Activated T-helper 1 cell treated with anti-CD3 and anti-CD28 coated beads, Interleukin-12 subunit alpha, Interleukin-12 subunit beta, Interleukin-2, Interleukin-4 antibody, amounts not matched to agents 30 ng/mL and 10 ng/mL and 1 ng/mL, durations not matched to agents 14 hours and 24 hours and 36 hours (primary cell): ENCODE measurements at regions of chr11 and their contacts with region 1.

Region 1: GRCh38 chr11:73141848-73142286 is 251 bp downstream of the FCHSD2 start:
- DNase-seq: peak; percentile 61
- H3K4me3 Mint-ChIP-seq: peak overlapping the region; percentile 99
- H3K27ac Mint-ChIP-seq: peak overlapping the region; percentile 96
- H3K4me1 Mint-ChIP-seq: peaks cover 56% of the 10 kb centered on the region
- H3K27me3 Mint-ChIP-seq: no peaks in the 10 kb centered on the region

Region 2: DNA sequence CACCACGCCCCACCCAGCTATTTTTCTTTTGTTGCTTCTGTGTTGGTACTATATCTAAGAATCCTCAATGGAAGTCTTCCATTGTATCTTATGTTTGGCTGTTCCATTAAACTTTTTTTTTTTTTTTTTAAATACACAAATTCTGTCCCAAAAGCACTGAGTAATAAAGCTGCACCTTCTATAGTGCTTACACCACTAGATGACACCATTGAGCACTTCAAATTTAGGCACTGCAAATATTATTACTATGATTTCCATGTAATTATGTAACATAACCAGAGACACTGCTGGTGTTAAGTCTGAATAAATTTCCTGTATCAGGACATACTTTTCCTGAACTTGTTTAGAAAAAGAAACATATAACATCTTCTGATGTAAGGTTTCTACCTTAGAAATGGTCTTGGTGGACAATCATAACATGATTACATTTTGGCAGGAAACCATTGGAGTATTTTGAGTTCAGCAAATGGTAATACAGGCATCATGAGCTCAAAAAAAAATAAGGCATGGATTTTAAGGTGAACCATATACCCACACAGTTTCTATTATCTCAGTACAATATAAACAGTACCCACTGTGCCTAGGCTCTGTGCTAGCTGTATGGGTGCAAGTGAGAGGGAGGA is 217.2 kb before region 1 on chr11:
- intact Hi-C with region 1: loop called (anchors 10 kb)
- DNase-seq: no peak
- H3K4me3 Mint-ChIP-seq: no peak overlapping the region
- H3K27ac Mint-ChIP-seq: no peak overlapping the region
- H3K4me1 Mint-ChIP-seq: peaks cover 7% of the 10 kb centered on the region
- H3K27me3 Mint-ChIP-seq: no peaks in the 10 kb centered on the region

Region 3: GRCh38 chr11:73152861-73153483 is 11.1 kb after region 1 on chr11:
- intact Hi-C with region 1: loop called (anchors 1 kb)
- DNase-seq: peak; percentile 51
- H3K4me3 Mint-ChIP-seq: peak overlapping the region; percentile 1
- H3K27ac Mint-ChIP-seq: peak overlapping the region; percentile 75
- H3K4me1 Mint-ChIP-seq: peaks cover 92% of the 10 kb centered on the region
- H3K27me3 Mint-ChIP-seq: peaks cover 2% of the 10 kb centered on the region

Region 4: GRCh38 chr11:73376160-73376802 is 234.4 kb after region 1 on chr11 and contains the start of gene RELT:
- intact Hi-C with region 1: loop called (anchors 2 kb)
- DNase-seq: peak; percentile 94
- H3K4me3 Mint-ChIP-seq: peak within 1 kb of the TSS; percentile 91
- H3K27ac Mint-ChIP-seq: peak within 1 kb of the TSS; percentile 90
- H3K4me1 Mint-ChIP-seq: peaks cover 28% of the 10 kb centered on the region
- H3K27me3 Mint-ChIP-seq: no peaks in the 10 kb centered on the region
- total RNA-seq, gene RELT: 34.6 and 37.6 TPM in 2 replicates

Region 5: GRCh38 chr11:73453562-73453961 is 311.7 kb after region 1 on chr11:
- intact Hi-C with region 1: no loop called
- DNase-seq: no peak
- H3K4me3 Mint-ChIP-seq: no peak overlapping the region
- H3K27ac Mint-ChIP-seq: no peak overlapping the region
- H3K4me1 Mint-ChIP-seq: no peaks in the 10 kb centered on the region
- H3K27me3 Mint-ChIP-seq: no peaks in the 10 kb centered on the region

Region 6: GRCh38 chr11:73876424-73877300 is 734.8 kb after region 1 on chr11 and contains the starts of genes COA4 and PAAF1:
- intact Hi-C with region 1: loop called (anchors 2 kb)
- DNase-seq: peak; percentile 92
- H3K4me3 Mint-ChIP-seq: peak within 1 kb of the TSS; percentile 93
- H3K27ac Mint-ChIP-seq: peak within 1 kb of the TSS; percentile 100
- H3K4me1 Mint-ChIP-seq: peaks cover 30% of the 10 kb centered on the region
- H3K27me3 Mint-ChIP-seq: no peaks in the 10 kb centered on the region
- total RNA-seq, gene COA4: 99.1 and 102 TPM in 2 replicates
- total RNA-seq, gene PAAF1: 22.4 and 25.0 TPM in 2 replicates